Ascending aorta (tissue), 2 donors: ENCODE measurements at regions of chr6 and their contacts with region 1.

Region 1: DNA sequence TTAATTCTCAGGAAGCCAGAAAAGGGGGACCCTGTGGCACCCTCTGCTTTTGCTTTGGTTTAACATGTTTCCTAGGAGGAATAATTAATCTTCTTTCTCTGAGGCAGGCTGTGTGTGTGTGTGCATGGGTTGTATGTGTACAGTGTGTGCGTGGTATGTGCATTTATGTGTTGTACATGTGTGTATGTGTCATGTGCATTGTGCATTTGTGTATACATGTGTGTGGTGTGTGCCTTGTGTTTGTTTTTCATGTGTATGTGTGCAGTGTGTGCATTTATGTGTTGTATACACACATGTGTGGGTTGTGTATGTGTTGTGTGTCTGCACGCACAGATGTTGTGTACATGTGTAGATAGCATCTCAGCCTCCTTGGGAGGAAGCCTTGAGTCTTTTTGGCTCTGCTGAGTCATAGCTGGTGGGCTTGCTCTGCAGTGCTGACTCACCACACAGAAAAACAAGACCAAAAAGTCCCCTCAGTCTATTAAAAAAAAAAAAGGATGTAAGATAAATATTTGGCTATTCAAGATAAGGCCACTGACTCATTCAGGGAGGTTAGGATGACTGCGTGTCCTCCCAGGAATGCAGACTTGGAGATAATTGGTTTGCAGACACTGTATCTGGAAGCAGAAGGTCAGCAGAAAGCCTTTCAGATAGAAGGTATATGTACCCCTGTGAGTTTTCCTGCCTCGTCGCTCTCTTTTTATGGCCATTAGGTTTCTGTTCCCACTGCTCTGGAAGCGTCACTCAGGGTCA is 58.6 kb downstream of the SYNJ2 start:
- DNase-seq: peak in 1 of 2 donors; percentile 83
- H3K4me3 ChIP-seq: no peak overlapping the region
- H3K27ac ChIP-seq: peak overlapping the region; percentile 91 to 95
- H3K4me1 ChIP-seq: peaks cover 43 to 68% of the 10 kb centered on the region in 2 donors
- H3K27me3 ChIP-seq: no peaks in the 10 kb centered on the region
- CTCF ChIP-seq: no peak

Region 2: DNA sequence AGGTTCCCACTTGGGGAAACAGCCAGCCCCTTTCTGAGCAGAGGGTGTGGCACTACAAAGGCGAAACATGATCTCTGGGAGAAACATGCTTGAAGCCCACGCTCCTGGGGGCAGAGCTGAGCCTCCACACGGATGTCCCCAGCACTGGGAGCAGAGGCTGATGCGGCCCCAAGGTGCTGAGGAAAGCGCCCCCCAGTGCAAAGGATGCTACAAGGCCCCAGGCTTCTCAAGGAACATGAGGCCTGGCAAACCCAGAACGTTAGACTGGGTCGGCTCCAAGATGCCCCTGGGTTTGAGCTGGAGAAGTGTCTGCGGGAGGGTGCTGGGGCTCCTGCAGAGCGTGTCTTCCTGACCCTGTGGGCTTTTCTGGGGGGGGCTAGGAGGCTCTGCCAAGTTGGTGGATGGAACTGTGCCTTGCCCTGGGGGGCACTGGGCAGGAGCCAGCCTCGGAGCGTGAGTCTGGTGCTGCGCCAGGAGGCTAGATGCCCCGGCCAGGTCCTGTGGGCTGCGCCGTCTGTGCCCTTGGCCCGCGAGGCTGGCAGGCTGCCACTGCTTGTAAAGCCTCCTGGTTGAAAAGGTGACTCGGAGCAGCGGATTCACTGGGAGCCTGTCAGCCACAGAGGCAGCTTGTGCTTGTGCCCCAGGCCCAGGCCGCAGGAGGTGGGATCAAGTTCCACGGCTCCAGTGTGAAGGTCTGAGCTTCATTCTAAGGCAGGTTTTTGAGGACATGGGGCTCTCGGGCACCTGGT is 50.5 kb before region 1 on chr6:
- intact Hi-C with region 1: no loop called
- DNase-seq: no peak
- H3K4me3 ChIP-seq: peak overlapping the region; percentile 16 to 22
- H3K27ac ChIP-seq: peak overlapping the region; percentile 0 to 59
- H3K4me1 ChIP-seq: peaks cover under 1 to 14% of the 10 kb centered on the region in 2 donors
- H3K27me3 ChIP-seq: no peaks in the 10 kb centered on the region
- CTCF ChIP-seq: no peak

Region 3: DNA sequence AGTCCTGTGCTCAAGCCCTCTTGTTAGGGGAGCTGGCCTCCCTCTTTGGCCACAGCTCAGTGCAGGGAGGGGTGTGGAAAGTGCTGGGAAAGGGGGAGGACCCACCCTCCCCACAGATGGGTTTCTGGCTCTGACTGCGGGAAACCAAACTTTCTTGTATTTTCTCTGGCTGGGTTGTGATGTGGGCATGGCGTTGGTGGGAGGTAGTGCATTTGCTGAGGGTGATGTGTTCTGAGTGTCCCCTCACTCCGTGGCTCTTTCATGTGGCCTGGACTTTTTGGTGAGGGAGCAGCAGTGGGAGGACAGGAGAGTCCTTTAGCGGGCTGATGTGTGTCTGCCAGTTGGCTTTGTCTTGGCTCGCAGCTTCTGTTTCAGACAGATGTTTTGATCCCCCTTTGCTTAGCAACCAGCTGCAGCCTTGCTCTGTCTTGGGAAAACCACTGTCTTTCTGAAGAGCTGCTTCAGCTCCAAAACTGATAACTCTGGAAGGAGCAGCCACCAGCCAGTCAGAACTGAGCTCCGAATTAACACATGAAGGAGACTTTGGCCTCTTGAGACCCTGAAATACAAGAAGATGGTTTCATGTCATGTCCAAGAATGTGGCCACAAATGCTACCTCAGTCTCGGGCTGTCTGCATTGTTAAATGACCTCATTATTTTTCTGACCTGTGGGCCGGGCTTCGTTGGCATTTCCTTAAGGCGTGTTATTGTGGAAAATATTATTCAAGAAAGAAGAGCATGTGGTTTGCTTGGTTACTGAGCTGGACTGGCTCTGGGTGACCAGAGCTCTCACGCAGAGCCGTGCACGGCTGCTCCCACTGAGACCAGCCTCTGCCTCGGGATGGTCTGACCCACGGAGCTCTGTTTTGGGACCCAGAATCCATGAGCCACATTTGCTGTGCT is 37.0 kb before region 1 on chr6:
- intact Hi-C with region 1: loop called (anchors 2 kb)
- DNase-seq: peak in 1 of 2 donors; percentile 90
- H3K4me3 ChIP-seq: peak overlapping the region in 1 of 2 donors; percentile 24
- H3K27ac ChIP-seq: peak overlapping the region; percentile 90
- H3K4me1 ChIP-seq: peaks cover 23 to 44% of the 10 kb centered on the region in 2 donors
- H3K27me3 ChIP-seq: no peaks in the 10 kb centered on the region
- CTCF ChIP-seq: no peak

Region 4: DNA sequence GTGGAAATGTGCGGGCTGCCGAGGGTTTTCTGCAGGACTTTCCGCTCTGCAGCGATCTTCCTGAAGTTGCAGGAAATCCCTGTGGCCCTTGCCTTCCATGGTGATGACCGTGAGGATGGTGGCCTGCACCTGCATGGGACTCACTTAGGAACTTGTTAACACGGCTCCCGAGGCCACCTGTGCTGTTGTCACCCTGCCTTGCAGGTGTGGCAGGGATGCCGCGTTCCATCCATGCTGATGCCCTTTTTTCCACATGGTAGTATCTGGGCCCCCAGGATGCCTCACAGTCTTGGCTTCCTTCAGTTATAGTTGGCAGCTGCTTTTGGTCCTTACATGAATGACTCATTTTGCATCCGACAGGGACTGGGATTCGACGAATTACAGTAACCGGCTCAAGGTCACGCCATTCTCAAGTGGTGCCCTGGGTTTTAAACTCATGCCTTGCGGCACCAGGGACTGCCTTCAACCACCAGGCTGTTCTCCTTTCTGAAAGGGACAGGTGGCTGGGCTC is 21.3 kb before region 1 on chr6:
- intact Hi-C with region 1: loop called (anchors 1 kb)
- DNase-seq: no peak
- H3K4me3 ChIP-seq: no peak overlapping the region
- H3K27ac ChIP-seq: peak overlapping the region; percentile 76 to 92
- H3K4me1 ChIP-seq: peaks cover 6 to 18% of the 10 kb centered on the region in 2 donors
- H3K27me3 ChIP-seq: no peaks in the 10 kb centered on the region
- CTCF ChIP-seq: no peak

Region 5: GRCh38 chr6:158026054-158026900 is 13.9 kb before region 1 on chr6:
- intact Hi-C with region 1: loop called (anchors 2 kb)
- DNase-seq: peak; percentile 91 to 95
- H3K4me3 ChIP-seq: peak overlapping the region; percentile 36 to 44
- H3K27ac ChIP-seq: peak overlapping the region; percentile 81 to 84
- H3K4me1 ChIP-seq: peaks cover 4 to 25% of the 10 kb centered on the region in 2 donors
- H3K27me3 ChIP-seq: no peaks in the 10 kb centered on the region
- CTCF ChIP-seq: peak; percentile 36 to 50 (median 46)

Region 6: GRCh38 chr6:158060455-158061360 is 20.5 kb after region 1 on chr6:
- intact Hi-C with region 1: loop called (anchors 1 kb)
- DNase-seq: peak; percentile 78 to 97
- H3K4me3 ChIP-seq: peak overlapping the region in 1 of 2 donors; percentile 50
- H3K27ac ChIP-seq: peak overlapping the region; percentile 96 to 99
- H3K4me1 ChIP-seq: peaks cover 10 to 24% of the 10 kb centered on the region in 2 donors
- H3K27me3 ChIP-seq: no peaks in the 10 kb centered on the region
- CTCF ChIP-seq: no peak

Region 7: DNA sequence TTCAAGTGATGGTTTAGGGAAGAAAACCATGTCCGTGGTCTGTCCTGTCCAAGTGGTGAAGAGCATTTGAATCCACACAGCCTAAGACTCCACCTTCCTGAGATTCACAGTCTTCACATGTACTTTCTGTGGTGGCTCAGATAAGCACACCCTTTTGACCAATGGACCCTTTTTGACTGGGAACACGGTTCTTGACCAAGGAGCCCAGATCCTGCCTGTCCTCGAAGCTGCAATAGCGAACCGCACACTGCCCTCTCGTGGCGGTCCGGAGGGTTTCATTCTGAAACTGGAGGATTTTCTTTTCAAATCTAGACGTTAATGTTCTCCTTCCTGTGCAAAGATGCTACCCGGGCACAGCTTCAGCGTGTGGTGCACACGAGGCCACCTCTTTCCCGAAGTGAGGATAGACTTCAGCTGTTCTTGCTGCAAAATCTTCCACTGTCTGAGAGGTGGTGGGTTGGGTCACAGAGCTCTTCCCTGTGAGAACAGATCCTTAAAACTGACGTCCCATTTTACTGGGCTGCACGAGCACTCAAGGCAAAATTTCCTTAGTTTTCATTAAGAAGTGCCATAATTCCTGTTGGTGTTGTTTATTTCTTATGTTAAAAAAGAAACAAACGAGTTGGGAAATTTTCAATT is 32.0 kb after region 1 on chr6:
- intact Hi-C with region 1: loop called (anchors 2 kb)
- DNase-seq: peak in 1 of 2 donors; percentile 88
- H3K4me3 ChIP-seq: no peak overlapping the region
- H3K27ac ChIP-seq: peak overlapping the region; percentile 26 to 36
- H3K4me1 ChIP-seq: peaks cover 0 to 11% of the 10 kb centered on the region in 2 donors
- H3K27me3 ChIP-seq: no peaks in the 10 kb centered on the region
- CTCF ChIP-seq: peak; percentile 81 to 93 (median 82)

Region 8: DNA sequence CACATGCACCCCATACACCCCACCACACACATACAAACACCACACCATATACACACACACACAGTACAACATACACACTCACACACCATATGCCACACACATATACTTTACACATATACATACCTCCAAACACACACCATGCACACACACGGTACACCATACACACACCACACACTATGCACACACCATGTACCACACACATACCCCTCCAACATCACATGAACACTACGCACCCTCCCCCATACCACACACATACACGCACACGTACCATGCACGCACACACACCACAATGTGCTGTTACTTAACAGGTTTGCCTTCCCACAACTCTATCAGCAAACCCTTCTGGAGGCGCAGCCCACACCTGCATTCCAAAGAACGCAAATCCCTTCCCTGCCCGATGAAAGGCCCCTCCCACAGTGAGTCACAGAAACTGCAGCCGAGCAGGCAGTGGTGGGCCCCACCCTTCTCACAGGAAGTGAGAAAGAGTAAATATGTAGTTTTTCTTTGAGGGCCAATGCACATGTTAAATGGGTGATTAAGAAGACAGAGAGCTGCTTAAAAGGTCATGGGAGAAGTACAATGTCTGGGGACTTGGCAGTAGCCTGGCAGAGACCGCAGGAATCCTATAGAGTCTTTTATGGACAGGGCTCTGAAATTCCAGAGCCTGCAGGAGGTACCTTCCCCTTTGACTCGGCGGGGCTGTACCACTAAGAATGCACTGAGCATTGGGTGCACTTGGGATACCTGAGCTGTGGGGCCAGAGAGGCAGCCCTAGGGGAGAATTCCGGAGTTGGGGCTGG is 813.0 kb after region 1 on chr6:
- intact Hi-C with region 1: no loop called
- DNase-seq: peak; percentile 27 to 76
- H3K4me3 ChIP-seq: no peak overlapping the region
- H3K27ac ChIP-seq: no peak overlapping the region
- H3K4me1 ChIP-seq: no peaks in the 10 kb centered on the region
- H3K27me3 ChIP-seq: no peaks in the 10 kb centered on the region
- CTCF ChIP-seq: no peak